Caco-2 (cell line): ENCODE measurements at regions of chr1 and their contacts with region 1.

Region 1: DNA sequence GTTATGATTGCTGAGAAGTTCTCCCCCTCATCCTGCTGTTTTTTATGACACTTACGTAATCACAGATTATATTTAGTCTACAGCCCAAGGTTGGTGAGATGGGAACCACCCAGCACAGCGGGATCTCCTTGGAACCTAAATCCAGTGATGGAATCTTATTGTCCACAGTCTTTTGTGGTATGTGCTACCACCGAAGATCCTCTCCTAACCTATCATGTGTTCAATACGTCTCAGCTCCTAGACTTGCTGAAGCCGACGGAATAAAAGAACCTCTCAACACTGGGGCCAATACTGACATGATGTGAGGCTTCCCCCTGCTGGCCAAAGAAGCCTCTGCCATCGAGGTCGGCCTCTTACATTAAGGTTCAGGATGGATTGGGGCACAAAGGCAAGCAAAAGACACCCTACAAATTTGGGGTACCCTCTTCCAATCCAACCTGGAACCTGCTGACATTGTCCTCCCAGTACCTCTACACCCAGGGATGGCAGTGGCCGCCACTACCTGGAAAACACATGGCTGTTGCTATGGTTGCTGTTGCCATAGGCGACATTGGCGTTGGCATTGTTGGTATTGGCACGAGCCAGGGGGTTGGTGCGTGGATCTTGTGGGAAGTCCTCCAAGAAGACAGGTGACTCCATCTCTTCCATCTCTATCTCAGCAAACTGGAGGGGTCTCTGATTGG is 19.4 kb upstream of the KIF21B start:
- DNase-seq: peak; percentile 67 to 73
- H3K4me3 ChIP-seq: no peak overlapping the region
- H3K4me3 Mint-ChIP-seq: no peak overlapping the region
- H3K27ac Mint-ChIP-seq: no peak overlapping the region
- H3K4me1 ChIP-seq: no peaks in the 10 kb centered on the region
- H3K4me1 Mint-ChIP-seq: no peaks in the 10 kb centered on the region
- H3K27me3 ChIP-seq: no peaks in the 10 kb centered on the region
- H3K27me3 Mint-ChIP-seq: peaks cover 2% of the 10 kb centered on the region
- CTCF ChIP-seq: peak; percentile 83 to 85

Region 2: DNA sequence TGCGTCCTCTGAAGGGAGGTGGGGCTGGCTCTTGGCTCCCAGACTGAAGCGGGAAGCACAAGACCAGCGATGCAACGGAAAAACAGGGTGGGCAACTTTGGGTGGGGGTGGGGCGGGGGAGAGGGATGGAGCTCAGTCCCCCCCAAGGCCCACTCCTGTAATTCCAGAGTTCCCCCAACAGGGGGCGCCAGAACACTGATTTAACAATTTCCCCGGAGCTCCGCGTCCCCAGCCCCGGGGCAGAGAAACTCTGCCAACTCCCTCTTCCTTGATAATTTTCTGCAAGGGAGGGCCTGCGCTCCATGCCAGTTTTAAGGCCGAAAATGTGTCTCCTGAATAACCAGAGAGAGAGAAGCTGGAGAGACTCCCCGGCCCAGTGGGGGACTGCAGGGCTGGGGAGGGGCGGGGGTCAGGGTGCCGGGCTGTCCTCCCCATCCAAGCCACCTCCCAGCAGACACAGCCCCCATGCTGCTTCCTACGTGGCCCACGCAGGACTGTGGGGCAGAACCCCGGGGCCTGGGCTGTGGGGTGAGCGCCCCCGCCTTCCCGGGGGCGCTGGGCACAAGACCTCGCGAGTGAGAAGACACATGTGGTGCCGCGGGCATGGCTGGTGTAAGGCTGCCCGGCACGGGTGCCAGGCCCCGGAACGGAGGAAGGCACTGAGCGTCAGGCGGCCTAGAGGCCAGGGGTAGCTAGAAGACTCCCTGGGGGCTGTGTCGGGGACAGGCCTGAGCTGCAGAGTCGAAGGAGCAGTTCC is 70.8 kb before region 1 on chr1:
- CTCF ChIA-PET with region 1: interaction called, 13 read pairs
- POLR2A ChIA-PET with region 1: no interaction called
- intact Hi-C with region 1: loop called (anchors 5 kb)
- DNase-seq: peak; percentile 50 to 67
- H3K4me3 ChIP-seq: no peak overlapping the region
- H3K4me3 Mint-ChIP-seq: no peak overlapping the region
- H3K27ac Mint-ChIP-seq: no peak overlapping the region
- H3K4me1 ChIP-seq: no peaks in the 10 kb centered on the region
- H3K4me1 Mint-ChIP-seq: no peaks in the 10 kb centered on the region
- H3K27me3 ChIP-seq: no peaks in the 10 kb centered on the region
- H3K27me3 Mint-ChIP-seq: no peaks in the 10 kb centered on the region
- CTCF ChIP-seq: peak; percentile 60 to 94